AG04450 (cell line): ENCODE measurements at regions of chr10 and their contacts with region 1.

Region 1: GRCh38 chr10:43204943-43205671 is 61.8 kb downstream of the RASGEF1A start:
- DNase-seq: peak; percentile 11
- H3K4me3 ChIP-seq: no peak overlapping the region
- H3K27ac ChIP-seq: no peak overlapping the region
- H3K27me3 ChIP-seq: peaks cover 7% of the 10 kb centered on the region
- CTCF ChIP-seq: peak; percentile 75

Region 2: GRCh38 chr10:43170491-43170890 is 34.6 kb before region 1 on chr10:
- CTCF ChIA-PET with region 1: interaction called, 21 read pairs
- POLR2A ChIA-PET with region 1: no interaction called
- DNase-seq: no peak
- H3K4me3 ChIP-seq: no peak overlapping the region
- H3K27ac ChIP-seq: no peak overlapping the region
- H3K27me3 ChIP-seq: no peaks in the 10 kb centered on the region
- CTCF ChIP-seq: peak; percentile 46

Region 3: GRCh38 chr10:43193496-43194080 is 11.5 kb before region 1 on chr10:
- CTCF ChIA-PET with region 1: interaction called, 15 read pairs
- POLR2A ChIA-PET with region 1: no interaction called
- DNase-seq: no peak
- H3K4me3 ChIP-seq: no peak overlapping the region
- H3K27ac ChIP-seq: no peak overlapping the region
- H3K27me3 ChIP-seq: peaks cover 3% of the 10 kb centered on the region
- CTCF ChIP-seq: no peak

Region 4: DNA sequence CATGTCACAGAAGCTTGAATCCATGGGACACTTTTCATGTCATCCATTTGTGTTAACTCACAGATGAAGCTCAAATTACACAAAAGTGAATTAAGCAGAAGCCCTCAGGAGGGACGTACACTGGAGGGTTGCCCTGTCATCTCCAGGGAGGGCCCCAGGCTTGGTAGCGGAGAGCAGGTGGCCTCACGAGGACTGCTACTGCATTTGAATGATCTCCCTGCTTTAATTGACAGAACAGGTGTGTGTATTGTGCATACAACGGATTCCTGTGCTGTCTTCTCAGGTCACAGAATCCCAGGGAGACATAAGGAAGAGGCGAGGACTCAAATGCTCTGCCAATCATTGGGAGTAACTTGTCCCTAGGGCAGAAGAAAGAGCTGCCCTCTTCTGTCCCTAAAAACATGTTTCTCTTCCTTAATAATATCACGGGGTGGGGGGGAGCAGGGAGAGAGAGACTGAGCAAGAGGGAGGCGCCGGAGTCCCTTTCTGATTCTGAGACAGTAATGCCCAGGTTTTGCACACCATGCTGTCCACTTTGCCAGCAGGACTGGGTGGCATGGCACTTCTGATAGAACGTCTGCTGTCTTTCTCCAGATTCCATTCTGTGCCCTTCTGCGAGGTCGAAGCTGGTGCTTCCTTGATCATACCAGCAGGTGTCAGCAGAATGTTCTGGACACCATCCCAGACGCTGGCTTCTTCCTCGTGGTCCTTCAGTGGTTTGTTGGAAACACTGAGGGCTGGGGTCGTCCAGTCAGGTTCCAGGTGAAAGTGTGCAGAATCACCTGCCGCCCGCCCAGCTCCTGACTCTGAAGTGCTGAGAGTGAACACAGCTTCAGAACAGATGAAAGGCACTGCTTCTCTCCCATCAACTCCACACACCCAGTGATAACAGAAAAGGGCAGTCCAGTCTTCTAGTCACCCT is 87.9 kb after region 1 on chr10:
- CTCF ChIA-PET with region 1: no interaction called
- POLR2A ChIA-PET with region 1: no interaction called
- DNase-seq: peak; percentile 20
- H3K4me3 ChIP-seq: no peak overlapping the region
- H3K27ac ChIP-seq: no peak overlapping the region
- H3K27me3 ChIP-seq: peaks cover 8% of the 10 kb centered on the region
- CTCF ChIP-seq: peak; percentile 72